Common myeloid progenitor, CD34-positive (primary cell): ENCODE measurements at regions of chr19 and their contacts with region 1.

Region 1: GRCh38 chr19:17859533-17860330 is at the start of gene RPL18A:
- DNase-seq: peak; percentile 100
- H3K4me3 ChIP-seq: peak within 1 kb of the TSS; percentile 90 to 100 (median 97)
- H3K27ac ChIP-seq: peak within 1 kb of the TSS; percentile 77 to 93
- H3K4me1 ChIP-seq: peaks cover 9 to 30% (median 24%) of the 10 kb centered on the region in 4 experiments
- H3K27me3 ChIP-seq: no peaks in the 10 kb centered on the region

Region 2: DNA sequence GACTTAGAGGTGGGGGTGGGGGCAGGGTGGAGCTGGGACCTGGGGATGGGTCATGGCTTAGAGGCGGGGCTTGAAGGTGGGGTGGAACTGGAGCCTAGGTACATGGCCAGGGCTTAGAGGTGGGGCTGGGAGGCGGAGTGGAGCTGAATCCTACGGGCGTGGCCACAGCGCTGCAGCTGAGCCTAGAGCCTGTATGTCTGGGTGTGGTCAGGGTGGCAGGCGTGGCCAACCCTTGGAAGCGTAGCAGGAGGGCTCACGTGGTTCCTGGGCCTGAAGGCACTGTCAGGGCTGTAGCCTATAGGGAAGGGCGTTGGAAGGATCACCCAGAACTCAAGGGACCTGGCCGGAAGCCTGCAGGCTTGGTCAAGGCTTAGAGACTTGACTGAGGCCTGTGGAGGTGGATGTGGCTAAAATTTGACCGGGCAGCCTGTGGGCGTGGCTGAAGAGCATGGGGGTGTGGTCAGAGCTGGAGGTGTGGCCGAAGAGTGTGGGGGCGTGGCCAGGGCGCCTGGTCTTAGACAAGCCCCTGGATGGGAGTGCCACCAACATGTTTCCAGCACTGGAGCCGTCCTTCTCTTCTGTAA is 280.0 kb before region 1 on chr19:
- CTCF ChIA-PET with region 1: no interaction called
- POLR2A ChIA-PET with region 1: no interaction called
- DNase-seq: peak in 2 of 3 donors; percentile 45 to 47
- H3K4me3 ChIP-seq: no peak overlapping the region
- H3K27ac ChIP-seq: no peak overlapping the region
- H3K4me1 ChIP-seq: no peaks in the 10 kb centered on the region
- H3K27me3 ChIP-seq: no peaks in the 10 kb centered on the region

Region 3: DNA sequence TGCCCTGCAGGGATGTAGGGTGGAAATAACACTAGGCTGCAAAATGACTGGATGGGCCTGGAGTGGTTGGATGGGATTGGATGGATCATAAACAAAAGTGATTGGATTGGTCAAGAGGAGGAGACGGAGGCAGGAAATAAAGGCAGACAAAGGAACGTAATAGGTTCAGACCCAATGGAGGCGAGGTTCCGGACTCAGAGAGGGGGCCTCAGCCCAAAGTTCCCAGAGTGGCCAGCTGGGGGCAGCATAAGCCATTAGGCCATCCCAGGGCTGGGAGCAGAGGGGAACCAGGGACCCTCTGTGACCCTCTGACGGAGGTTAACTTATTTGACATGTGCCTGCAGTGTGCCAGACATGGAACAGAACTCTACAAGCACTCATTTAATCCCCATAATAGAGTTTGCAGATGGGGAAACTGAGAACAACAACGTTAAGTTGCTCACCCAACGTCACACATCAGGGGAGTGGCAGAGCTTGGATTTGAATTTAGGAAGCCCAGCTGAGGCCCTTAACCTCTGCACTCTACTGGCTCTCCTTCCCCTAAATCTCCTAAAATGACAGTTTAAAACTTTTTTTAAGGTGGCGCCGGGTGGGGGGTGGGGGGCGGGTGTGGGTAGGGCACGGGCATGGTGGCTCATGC is 155.8 kb before region 1 on chr19:
- CTCF ChIA-PET with region 1: interaction called, 16 read pairs
- POLR2A ChIA-PET with region 1: no interaction called
- DNase-seq: peak; percentile 61 to 84 (median 83)
- H3K4me3 ChIP-seq: no peak overlapping the region
- H3K27ac ChIP-seq: no peak overlapping the region
- H3K4me1 ChIP-seq: peaks cover 0 to 3% (median under 1%) of the 10 kb centered on the region in 4 experiments
- H3K27me3 ChIP-seq: peaks cover 0 to 4% (median 0%) of the 10 kb centered on the region in 5 experiments

Region 4: GRCh38 chr19:17775245-17775916 is 84.4 kb before region 1 on chr19:
- CTCF ChIA-PET with region 1: interaction called, 15 read pairs
- POLR2A ChIA-PET with region 1: no interaction called
- DNase-seq: peak in 1 of 3 donors; percentile 47
- H3K4me3 ChIP-seq: no peak overlapping the region
- H3K27ac ChIP-seq: no peak overlapping the region
- H3K4me1 ChIP-seq: peaks cover 0 to 20% (median 9%) of the 10 kb centered on the region in 4 experiments
- H3K27me3 ChIP-seq: no peaks in the 10 kb centered on the region

Region 5: GRCh38 chr19:17794731-17795536 is 64.8 kb before region 1 on chr19 and contains the start of gene B3GNT3:
- CTCF ChIA-PET with region 1: interaction called, 36 read pairs
- POLR2A ChIA-PET with region 1: interaction called, 4 read pairs
- DNase-seq: peak in 1 of 3 donors; percentile 41
- H3K4me3 ChIP-seq: peak within 1 kb of the TSS in 6 of 7 experiments; percentile 26 to 72 (median 57)
- H3K27ac ChIP-seq: no peak within 1 kb of the TSS
- H3K4me1 ChIP-seq: peaks cover 2 to 59% (median 51%) of the 10 kb centered on the region in 4 experiments
- H3K27me3 ChIP-seq: no peaks in the 10 kb centered on the region

Region 6: GRCh38 chr19:17834350-17835181 is 25.2 kb before region 1 on chr19:
- CTCF ChIA-PET with region 1: interaction called, 13 read pairs
- POLR2A ChIA-PET with region 1: no interaction called
- DNase-seq: no peak
- H3K4me3 ChIP-seq: no peak overlapping the region
- H3K27ac ChIP-seq: no peak overlapping the region
- H3K4me1 ChIP-seq: no peaks in the 10 kb centered on the region
- H3K27me3 ChIP-seq: no peaks in the 10 kb centered on the region

Region 7: GRCh38 chr19:17879466-17879865 is 19.7 kb after region 1 on chr19:
- CTCF ChIA-PET with region 1: no interaction called
- POLR2A ChIA-PET with region 1: no interaction called
- DNase-seq: no peak
- H3K4me3 ChIP-seq: no peak overlapping the region
- H3K27ac ChIP-seq: no peak overlapping the region
- H3K4me1 ChIP-seq: no peaks in the 10 kb centered on the region
- H3K27me3 ChIP-seq: no peaks in the 10 kb centered on the region

Region 8: GRCh38 chr19:17902701-17903100 is 43.0 kb after region 1 on chr19:
- CTCF ChIA-PET with region 1: no interaction called
- POLR2A ChIA-PET with region 1: no interaction called
- DNase-seq: no peak
- H3K4me3 ChIP-seq: no peak overlapping the region
- H3K27ac ChIP-seq: no peak overlapping the region
- H3K4me1 ChIP-seq: no peaks in the 10 kb centered on the region
- H3K27me3 ChIP-seq: no peaks in the 10 kb centered on the region

Region 9: DNA sequence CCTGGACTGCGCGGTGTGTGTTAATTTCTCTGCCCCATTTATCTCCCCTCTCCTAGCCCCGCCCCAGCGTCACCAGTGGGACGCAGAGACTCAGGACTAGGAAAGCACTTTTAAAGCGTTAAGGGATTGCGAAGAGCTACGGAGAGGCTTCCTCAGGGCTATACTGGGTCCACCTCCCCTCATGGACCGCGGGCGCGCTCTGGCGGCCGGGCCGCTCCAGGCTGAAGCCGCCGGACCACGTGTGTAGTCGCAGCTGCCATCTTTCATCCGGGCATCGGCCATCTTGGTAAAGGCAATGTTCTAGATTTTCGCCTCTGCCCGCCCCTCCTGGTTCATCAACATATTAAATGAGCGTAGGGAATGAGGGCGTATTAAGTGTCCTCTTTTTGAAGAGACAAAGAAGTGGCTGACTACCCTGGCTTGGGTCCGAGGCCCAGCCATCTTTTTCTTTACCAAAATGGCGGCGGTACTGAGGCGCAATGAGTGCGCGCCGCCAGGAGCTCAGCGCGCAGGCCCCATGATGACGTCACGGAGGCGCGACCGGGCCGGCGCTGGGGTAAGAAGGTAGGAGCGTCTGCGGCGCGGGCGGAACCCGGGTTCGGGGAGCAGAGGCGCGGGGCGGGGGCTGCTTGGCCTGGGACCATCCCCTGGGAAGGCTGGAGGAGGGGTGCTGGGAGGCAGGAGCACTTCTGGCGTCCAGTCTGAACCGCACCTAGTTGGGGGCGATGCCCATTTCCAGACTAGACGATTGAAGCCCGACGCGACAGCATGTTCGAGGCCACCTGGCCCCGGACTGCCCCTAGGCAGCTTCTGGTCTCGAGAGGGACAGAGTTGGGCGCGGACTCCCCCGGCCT is 73.0 kb after region 1 on chr19 and contains the start of gene CCDC124:
- CTCF ChIA-PET with region 1: interaction called, 63 read pairs
- POLR2A ChIA-PET with region 1: interaction called, 21 read pairs
- DNase-seq: peak; percentile 95 to 97 (median 96)
- H3K4me3 ChIP-seq: peak within 1 kb of the TSS; percentile 80 to 96 (median 85)
- H3K27ac ChIP-seq: peak within 1 kb of the TSS; percentile 95 to 98
- H3K4me1 ChIP-seq: peaks cover 5 to 17% (median 16%) of the 10 kb centered on the region in 4 experiments
- H3K27me3 ChIP-seq: no peaks in the 10 kb centered on the region